Left ventricle myocardium inferior (tissue), 1 donor: ENCODE measurements at regions of chr10 and their contacts with region 1.

Region 1: GRCh38 chr10:28241741-28242399 is 61.0 kb downstream of the MPP7 start:
- DNase-seq: no peak
- H3K4me3 ChIP-seq: no peak overlapping the region
- H3K27ac ChIP-seq: no peak overlapping the region
- H3K4me1 ChIP-seq: no peaks in the 10 kb centered on the region
- H3K27me3 ChIP-seq: no peaks in the 10 kb centered on the region
- CTCF ChIP-seq: peak; percentile 95

Region 2: GRCh38 chr10:27446091-27446918 is 795.6 kb before region 1 on chr10:
- intact Hi-C with region 1: loop called (anchors 5 kb)
- DNase-seq: no peak
- H3K4me3 ChIP-seq: no peak overlapping the region
- H3K27ac ChIP-seq: no peak overlapping the region
- H3K4me1 ChIP-seq: no peaks in the 10 kb centered on the region
- H3K27me3 ChIP-seq: no peaks in the 10 kb centered on the region
- CTCF ChIP-seq: peak; percentile 59

Region 3: DNA sequence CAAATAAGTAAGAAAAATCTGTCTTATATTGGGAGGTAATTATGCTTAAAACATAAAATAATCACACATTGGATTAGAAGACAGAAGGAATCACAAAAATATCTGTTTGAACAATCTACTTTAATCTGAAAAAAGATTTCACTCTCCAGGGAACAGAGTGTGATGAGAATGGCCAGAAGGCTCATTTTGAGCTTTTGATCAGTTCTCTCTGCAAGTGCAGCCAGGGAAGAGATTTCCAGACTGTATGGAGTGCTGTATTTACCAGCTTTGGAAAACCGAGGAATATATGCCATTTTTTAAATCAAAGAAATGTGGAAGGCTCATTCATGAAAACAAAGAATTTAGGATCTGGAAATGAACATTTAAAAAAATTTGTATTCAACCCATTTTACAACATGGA is 208.1 kb after region 1 on chr10:
- intact Hi-C with region 1: no loop called
- DNase-seq: no peak
- H3K4me3 ChIP-seq: no peak overlapping the region
- H3K27ac ChIP-seq: no peak overlapping the region
- H3K4me1 ChIP-seq: no peaks in the 10 kb centered on the region
- H3K27me3 ChIP-seq: no peaks in the 10 kb centered on the region
- CTCF ChIP-seq: no peak